ENCODE measurements at regions of chr1 and their contacts with region 1.

Region 1: GRCh38 chr1:157691285-157691920 is 9.2 kb downstream of the FCRL3 start:
- DNase-seq: peak; percentile 58
- H3K4me3 Mint-ChIP-seq: no peak overlapping the region
- H3K27ac Mint-ChIP-seq: no peak overlapping the region
- H3K4me1 Mint-ChIP-seq: no peaks in the 10 kb centered on the region
- H3K27me3 Mint-ChIP-seq: peaks cover 48% of the 10 kb centered on the region
- CTCF ChIP-seq: peak; percentile 62

Region 2: DNA sequence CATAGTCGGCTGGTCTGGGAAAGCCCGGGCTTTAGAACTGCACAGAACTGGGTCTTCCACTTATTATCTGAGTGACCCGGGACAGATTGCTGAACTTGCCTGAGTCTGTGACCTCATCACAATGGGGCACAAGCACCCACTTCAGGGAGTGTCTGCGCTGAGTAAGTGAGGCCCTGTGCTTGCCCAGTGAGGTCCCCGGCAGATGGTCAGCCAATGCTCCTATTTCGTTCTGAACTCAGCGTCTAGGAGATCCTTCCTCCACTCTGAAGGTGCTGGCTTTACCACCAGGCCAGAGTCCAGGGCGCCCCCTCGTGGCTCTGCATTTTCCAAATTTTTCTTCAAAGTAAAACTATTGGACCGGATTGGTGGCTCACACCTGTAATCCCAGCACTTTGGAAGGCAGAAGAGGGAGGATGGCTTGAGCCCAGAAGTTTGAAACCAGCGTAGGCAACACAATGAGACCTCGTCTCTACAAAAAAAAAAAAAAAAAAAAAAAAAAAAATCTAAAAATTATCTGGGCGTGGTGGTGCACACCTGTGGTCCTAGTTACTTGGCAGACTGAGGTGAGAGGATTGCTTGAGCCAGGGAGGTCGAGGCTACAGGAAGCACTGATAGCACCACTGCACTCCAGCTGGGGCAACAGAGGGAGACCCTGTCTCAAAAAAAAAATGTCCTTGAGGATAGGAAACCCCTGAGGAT is 200.8 kb before region 1 on chr1:
- CTCF ChIA-PET with region 1: interaction called, 4 read pairs
- POLR2A ChIA-PET with region 1: no interaction called
- intact Hi-C with region 1: loop called (anchors 5 kb)
- DNase-seq: peak; percentile 80
- H3K4me3 Mint-ChIP-seq: no peak overlapping the region
- H3K27ac Mint-ChIP-seq: no peak overlapping the region
- H3K4me1 Mint-ChIP-seq: peaks cover 5% of the 10 kb centered on the region
- H3K27me3 Mint-ChIP-seq: peaks cover 44% of the 10 kb centered on the region
- CTCF ChIP-seq: peak; percentile 82

Region 3: GRCh38 chr1:157585984-157586383 is 105.4 kb before region 1 on chr1:
- CTCF ChIA-PET with region 1: interaction called, 142 read pairs
- POLR2A ChIA-PET with region 1: no interaction called
- intact Hi-C with region 1: no loop called
- DNase-seq: no peak
- H3K4me3 Mint-ChIP-seq: no peak overlapping the region
- H3K27ac Mint-ChIP-seq: no peak overlapping the region
- H3K4me1 Mint-ChIP-seq: no peaks in the 10 kb centered on the region
- H3K27me3 Mint-ChIP-seq: peaks cover 69% of the 10 kb centered on the region
- CTCF ChIP-seq: no peak

Region 4: GRCh38 chr1:157671895-157672294 is 19.5 kb before region 1 on chr1:
- CTCF ChIA-PET with region 1: interaction called, 16 read pairs
- POLR2A ChIA-PET with region 1: no interaction called
- intact Hi-C with region 1: no loop called
- DNase-seq: peak; percentile 46
- H3K4me3 Mint-ChIP-seq: no peak overlapping the region
- H3K27ac Mint-ChIP-seq: no peak overlapping the region
- H3K4me1 Mint-ChIP-seq: no peaks in the 10 kb centered on the region
- H3K27me3 Mint-ChIP-seq: peaks cover 15% of the 10 kb centered on the region
- CTCF ChIP-seq: no peak

Region 5: DNA sequence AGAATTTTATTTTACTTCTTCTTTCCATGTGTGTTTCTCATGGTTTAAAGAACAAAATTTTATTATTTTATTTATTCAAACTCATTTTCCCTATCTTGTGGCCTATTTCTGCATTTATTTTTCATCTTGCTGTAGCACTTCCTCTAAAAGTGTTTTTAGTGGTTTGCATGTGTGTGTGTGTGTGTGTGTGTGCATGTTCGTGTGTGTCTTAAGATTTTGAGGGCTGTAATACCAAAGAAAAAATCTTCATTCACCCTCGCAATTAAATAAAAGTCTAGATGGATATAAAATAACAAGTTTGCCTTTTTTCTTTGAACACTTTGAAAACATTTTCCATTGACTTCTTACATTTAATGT is 33.8 kb after region 1 on chr1:
- CTCF ChIA-PET with region 1: interaction called, 14 read pairs
- POLR2A ChIA-PET with region 1: no interaction called
- intact Hi-C with region 1: no loop called
- DNase-seq: no peak
- H3K4me3 Mint-ChIP-seq: no peak overlapping the region
- H3K27ac Mint-ChIP-seq: no peak overlapping the region
- H3K4me1 Mint-ChIP-seq: no peaks in the 10 kb centered on the region
- H3K27me3 Mint-ChIP-seq: peaks cover 16% of the 10 kb centered on the region
- CTCF ChIP-seq: no peak

Region 6: GRCh38 chr1:157798211-157798610 is 106.8 kb after region 1 on chr1:
- CTCF ChIA-PET with region 1: no interaction called
- POLR2A ChIA-PET with region 1: no interaction called
- intact Hi-C with region 1: no loop called
- DNase-seq: peak; percentile 56
- H3K4me3 Mint-ChIP-seq: no peak overlapping the region
- H3K27ac Mint-ChIP-seq: no peak overlapping the region
- H3K4me1 Mint-ChIP-seq: peaks cover 5% of the 10 kb centered on the region
- H3K27me3 Mint-ChIP-seq: peaks cover 51% of the 10 kb centered on the region
- CTCF ChIP-seq: no peak

Measured in MCF 10A (cell line).